Activated CD8-positive, alpha-beta T cell treated with anti-CD3 and anti-CD28 coated beads for 36 hours (primary cell): ENCODE measurements at regions of chr17 and their contacts with region 1.

Region 1: DNA sequence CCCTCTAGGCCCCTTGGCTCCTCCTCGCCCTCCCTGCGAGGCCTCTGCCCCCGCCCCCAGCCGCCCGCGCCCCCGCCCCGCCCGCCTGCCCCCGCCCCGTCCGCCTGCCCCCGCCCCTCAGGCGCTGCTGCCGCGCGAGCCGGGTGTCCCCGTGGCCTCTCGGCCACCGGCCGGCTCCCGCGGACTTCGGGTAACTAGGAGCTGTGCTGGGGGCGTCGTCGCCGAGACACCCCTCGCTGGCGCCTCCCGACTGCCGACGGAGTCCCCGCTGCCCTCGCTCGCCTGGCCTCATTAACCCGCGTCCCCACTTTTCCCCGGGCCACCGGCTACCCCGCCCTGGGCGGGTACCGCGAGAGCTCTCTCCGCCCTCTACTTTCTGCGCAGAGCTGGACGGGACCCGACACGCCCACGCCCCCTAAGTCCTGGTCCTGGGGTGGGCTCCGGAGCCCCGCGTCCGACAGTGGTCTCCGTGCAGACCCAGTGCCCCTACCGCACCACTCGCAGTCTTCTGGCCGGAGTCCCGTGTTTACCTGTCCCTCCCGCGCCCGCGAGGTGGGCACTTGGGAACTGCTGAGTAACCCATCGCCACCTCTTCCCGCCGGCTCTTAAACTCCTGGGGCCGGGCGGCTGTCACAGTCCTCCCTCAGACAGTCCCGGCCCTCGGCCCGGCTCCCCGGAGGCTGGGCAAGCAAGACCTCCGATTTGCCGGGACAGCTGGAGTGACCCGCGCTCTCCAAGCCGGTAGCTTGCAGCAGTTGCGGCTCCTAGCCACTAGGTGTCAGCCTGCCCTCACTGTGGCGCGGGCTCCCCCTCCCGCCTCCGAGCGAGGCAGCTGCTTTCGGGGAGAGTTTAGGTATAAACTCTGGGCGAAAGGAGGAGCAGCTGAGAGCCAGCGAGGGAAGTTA is at the start of gene TLCD1:
- DNase-seq: peak; percentile 95
- ATAC-seq: peak; percentile 50
- H3K4me3 Mint-ChIP-seq: peak within 1 kb of the TSS; percentile 100
- H3K27ac Mint-ChIP-seq: peak within 1 kb of the TSS; percentile 99
- H3K4me1 Mint-ChIP-seq: peaks cover 39% of the 10 kb centered on the region
- H3K27me3 Mint-ChIP-seq: no peaks in the 10 kb centered on the region
- CTCF ChIP-seq: peak; percentile 100
- total RNA-seq, gene TLCD1: 6.5 to 8.7 TPM

Region 2: DNA sequence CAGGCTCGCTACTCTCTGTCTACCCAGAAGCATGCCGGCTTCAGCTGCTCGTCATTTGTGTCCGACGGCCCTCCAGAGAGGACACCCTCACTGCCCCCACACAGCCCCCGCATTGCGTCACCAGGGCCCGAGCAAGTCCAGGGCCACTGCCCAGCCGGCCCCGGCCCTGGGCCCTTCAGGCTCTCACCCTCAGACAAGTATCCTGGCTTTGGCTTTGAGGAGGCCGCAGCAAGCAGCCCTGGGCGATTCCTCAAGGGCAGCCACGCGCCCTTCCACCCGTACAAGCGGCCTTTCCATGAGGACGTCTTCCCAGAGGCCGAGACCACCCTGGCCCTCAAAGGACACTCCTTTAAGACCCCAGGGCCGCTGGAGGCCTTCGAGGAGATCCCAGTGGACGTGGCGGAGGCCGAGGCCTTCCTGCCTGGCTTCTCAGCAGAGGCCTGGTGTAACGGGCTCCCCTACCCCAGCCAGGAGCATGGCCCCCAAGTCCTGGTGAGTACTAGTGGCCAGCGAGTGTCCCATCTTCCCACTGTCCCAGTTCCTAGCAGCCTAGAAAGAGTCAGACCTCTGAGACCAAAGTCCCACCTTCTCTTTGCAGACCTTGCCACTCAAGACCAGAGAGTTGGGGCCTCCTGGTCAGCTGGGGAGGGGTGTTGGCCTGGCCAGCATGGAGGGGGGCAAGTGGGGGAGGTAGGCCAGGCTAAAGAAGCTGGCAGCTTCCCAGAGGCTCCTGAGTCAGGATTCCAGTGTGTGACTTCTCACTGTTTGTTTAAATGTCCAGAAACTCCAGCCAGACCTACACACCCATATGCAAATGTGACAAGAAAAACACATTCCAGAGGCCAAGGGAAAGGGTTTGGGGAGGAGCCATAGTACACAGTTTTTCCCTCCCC is 201.8 kb before region 1 on chr17:
- CTCF ChIA-PET with region 1: no interaction called
- POLR2A ChIA-PET with region 1: no interaction called
- intact Hi-C with region 1: no loop called
- DNase-seq: no peak
- ATAC-seq: no peak
- H3K4me3 Mint-ChIP-seq: no peak overlapping the region
- H3K27ac Mint-ChIP-seq: no peak overlapping the region
- H3K4me1 Mint-ChIP-seq: no peaks in the 10 kb centered on the region
- H3K27me3 Mint-ChIP-seq: no peaks in the 10 kb centered on the region
- CTCF ChIP-seq: no peak

Region 3: DNA sequence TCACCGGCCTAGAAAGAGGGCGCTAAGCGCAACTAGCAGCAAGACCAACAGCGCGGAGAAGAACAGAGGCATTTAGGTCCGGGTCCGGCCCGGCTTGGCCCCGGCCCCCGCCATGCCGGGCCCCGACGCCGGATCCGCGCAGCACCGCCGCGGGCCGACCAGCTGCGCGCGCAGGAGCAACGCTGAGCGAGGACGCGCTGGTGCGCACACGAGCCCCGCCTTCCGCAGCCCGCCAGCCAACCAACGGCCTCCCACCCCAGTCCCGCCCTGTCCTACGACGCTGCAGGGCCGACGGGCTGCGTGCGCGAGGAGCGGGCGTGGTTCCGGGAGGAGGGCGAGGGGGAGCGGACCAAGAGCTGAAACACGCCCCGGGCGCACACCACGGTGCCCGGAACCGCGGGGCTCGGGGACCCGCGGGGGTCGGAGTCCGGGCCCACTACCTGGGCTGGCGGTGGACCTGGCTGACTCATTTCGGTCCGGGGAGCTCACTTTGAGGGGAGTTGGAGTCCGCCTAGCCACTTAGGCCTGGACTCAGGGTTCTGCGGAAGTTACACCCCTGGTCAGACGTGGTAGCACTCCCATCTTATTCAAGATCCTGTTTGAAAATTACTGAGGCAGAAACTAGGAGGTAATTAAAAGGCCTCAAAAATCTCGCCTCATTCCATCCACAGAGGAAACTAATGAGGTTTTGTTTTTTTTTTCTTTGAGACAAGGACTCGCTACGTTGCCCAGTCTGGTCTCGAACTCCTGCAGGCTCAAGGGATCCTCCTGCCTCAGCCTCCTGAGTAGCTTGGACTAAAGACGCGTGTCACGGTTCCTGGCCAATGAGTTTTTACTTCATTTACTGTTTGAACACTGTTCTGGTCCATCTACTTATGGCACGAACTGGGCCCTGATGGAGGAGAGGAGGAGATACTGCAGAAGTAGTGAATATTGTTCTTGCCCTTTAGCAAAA is 81.2 kb before region 1 on chr17 and contains the start of gene BLTP2:
- CTCF ChIA-PET with region 1: interaction called, 34 read pairs
- POLR2A ChIA-PET with region 1: interaction called, 13 read pairs
- intact Hi-C with region 1: no loop called
- DNase-seq: peak; percentile 96
- ATAC-seq: peak; percentile 99
- H3K4me3 Mint-ChIP-seq: peak within 1 kb of the TSS; percentile 86
- H3K27ac Mint-ChIP-seq: peak within 1 kb of the TSS; percentile 84
- H3K4me1 Mint-ChIP-seq: peaks cover 40% of the 10 kb centered on the region
- H3K27me3 Mint-ChIP-seq: no peaks in the 10 kb centered on the region
- CTCF ChIP-seq: no peak
- total RNA-seq, gene BLTP2: 137 to 140 TPM

Region 4: DNA sequence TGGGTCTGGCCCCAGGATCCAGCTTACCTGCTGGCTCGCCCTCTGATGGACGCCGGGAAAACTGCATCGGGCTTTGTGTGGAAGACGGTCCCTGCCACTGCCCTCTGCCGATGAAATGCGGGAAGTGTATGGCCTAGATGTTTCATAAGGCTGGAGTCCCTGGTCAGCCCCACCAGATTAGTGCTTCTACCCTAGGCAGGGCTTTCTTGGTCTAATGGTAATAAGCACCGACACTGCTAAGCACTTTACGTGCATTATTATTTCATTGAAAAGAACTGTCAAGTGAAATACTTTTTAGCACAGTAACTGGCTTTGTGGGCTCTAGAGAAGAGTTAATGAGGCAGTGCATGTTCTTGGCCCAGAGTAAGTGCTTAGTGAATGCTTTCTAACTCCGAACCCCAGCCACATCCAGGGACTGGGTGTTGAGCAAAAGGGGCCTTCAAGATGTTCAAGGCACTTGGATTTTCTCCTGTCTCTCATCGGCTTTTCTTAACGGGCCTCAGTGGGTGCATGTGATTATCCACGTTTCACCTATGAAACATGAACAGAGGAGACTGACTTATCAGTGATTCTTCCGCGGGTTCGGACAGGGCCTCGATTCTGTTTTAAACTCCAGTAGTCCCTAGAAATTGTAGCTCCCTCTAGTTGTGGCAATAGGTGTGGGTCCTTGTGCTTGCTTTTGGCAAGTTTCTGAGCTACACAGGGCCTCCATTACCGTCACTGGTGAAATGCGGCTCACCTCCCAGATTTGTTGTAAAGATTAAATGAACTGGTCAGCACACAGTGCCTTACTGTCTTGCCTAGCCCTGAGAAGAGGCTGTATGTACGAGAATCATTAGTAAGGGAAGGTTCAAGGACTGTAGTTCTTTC is 23.9 kb after region 1 on chr17:
- CTCF ChIA-PET with region 1: interaction called, 609 read pairs
- POLR2A ChIA-PET with region 1: interaction called, 480 read pairs
- intact Hi-C with region 1: loop called (anchors 1 kb)
- DNase-seq: peak; percentile 98
- ATAC-seq: peak; percentile 93
- H3K4me3 Mint-ChIP-seq: no peak overlapping the region
- H3K27ac Mint-ChIP-seq: peak overlapping the region; percentile 38
- H3K4me1 Mint-ChIP-seq: peaks cover 46% of the 10 kb centered on the region
- H3K27me3 Mint-ChIP-seq: no peaks in the 10 kb centered on the region
- CTCF ChIP-seq: peak; percentile 100

Region 5: DNA sequence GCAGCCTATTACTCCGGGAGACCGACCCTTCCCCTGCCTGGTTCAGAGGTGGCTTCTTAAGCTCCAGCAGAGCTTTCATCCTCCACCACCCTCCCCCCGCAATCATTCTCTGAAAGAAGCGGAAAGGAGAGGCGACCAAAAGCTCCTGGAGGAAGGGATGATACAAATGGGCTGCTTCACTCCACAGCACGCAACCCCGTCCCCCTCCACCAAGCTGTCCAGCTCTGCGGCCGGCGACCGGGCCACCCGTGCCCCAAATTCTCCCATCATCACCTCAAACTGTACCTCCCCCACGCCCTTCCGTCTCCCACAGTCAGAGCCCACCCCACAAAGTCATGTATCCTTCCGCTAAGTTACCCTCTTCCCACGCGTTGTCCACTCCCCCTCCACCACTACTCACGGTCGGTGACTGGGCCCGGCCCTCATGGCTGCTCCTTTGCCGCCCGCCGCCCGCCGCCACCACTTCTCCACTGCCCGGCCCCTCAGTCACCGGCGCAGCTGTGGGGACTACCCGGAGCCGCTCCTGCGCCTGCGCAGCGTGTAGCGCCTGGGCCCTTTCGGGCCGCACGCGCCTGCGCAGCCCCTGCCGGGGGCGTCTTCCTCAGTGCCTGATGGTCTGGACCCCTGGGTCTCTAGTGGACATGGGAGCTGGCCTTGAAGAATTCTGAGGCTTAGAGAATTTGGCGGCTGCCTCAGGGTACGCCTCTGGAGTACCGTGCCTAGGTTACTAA is 116.0 kb after region 1 on chr17 and contains the start of gene FAM222B:
- CTCF ChIA-PET with region 1: interaction called, 22 read pairs
- POLR2A ChIA-PET with region 1: interaction called, 3 read pairs
- intact Hi-C with region 1: no loop called
- DNase-seq: peak; percentile 90
- ATAC-seq: peak; percentile 99
- H3K4me3 Mint-ChIP-seq: peak within 1 kb of the TSS; percentile 86
- H3K27ac Mint-ChIP-seq: peak within 1 kb of the TSS; percentile 92
- H3K4me1 Mint-ChIP-seq: peaks cover 21% of the 10 kb centered on the region
- H3K27me3 Mint-ChIP-seq: no peaks in the 10 kb centered on the region
- CTCF ChIP-seq: no peak
- total RNA-seq, gene FAM222B: 14.7 to 15.2 TPM

Region 6: GRCh38 chr17:28902819-28903545 is 176.5 kb after region 1 on chr17 and contains the start of gene DHRS13:
- CTCF ChIA-PET with region 1: interaction called, 19 read pairs
- POLR2A ChIA-PET with region 1: interaction called, 8 read pairs
- intact Hi-C with region 1: loop called (anchors 5 kb)
- DNase-seq: peak; percentile 93
- ATAC-seq: peak; percentile 95
- H3K4me3 Mint-ChIP-seq: peak within 1 kb of the TSS; percentile 88
- H3K27ac Mint-ChIP-seq: peak within 1 kb of the TSS; percentile 86
- H3K4me1 Mint-ChIP-seq: peaks cover 31% of the 10 kb centered on the region
- H3K27me3 Mint-ChIP-seq: no peaks in the 10 kb centered on the region
- CTCF ChIP-seq: peak; percentile 100
- total RNA-seq, gene DHRS13: 37.3 to 38.2 TPM

Region 7: DNA sequence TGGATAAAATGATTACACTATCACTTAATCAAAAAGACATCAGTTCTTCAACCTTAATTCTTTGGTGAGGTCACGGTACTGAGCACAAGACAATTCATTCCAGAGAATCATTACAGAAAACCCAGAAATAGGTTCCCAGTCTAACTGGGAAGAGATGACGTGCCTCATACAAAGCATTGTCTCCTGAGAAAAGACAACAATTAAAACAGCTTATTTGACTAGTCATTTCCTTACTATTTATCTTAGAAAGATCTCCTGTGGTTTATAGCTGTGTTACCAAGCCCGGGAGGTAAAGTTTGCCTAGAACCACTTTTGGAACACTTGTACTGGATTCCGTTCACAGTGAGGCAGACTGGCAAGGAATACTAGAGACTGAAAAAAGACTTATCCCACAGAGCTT is 219.8 kb after region 1 on chr17:
- CTCF ChIA-PET with region 1: interaction called, 66 read pairs
- POLR2A ChIA-PET with region 1: interaction called, 46 read pairs
- intact Hi-C with region 1: loop called (anchors 2 kb)
- DNase-seq: no peak
- ATAC-seq: no peak
- H3K4me3 Mint-ChIP-seq: peak overlapping the region; percentile 23
- H3K27ac Mint-ChIP-seq: peak overlapping the region; percentile 84
- H3K4me1 Mint-ChIP-seq: peaks cover 64% of the 10 kb centered on the region
- H3K27me3 Mint-ChIP-seq: no peaks in the 10 kb centered on the region
- CTCF ChIP-seq: no peak